HEK293 (cell line): ENCODE measurements at regions of chr14 and their contacts with region 1.

Region 1: GRCh38 chr14:34322940-34323418 is 139.1 kb downstream of the SPTSSA start:
- H3K4me3 ChIP-seq: no peak overlapping the region
- H3K27ac ChIP-seq: no peak overlapping the region
- H3K4me1 ChIP-seq: no peaks in the 10 kb centered on the region
- CTCF ChIP-seq: 0 out of 2 replicates have a peak, but pooled peaks have one; percentile 11

Region 2: DNA sequence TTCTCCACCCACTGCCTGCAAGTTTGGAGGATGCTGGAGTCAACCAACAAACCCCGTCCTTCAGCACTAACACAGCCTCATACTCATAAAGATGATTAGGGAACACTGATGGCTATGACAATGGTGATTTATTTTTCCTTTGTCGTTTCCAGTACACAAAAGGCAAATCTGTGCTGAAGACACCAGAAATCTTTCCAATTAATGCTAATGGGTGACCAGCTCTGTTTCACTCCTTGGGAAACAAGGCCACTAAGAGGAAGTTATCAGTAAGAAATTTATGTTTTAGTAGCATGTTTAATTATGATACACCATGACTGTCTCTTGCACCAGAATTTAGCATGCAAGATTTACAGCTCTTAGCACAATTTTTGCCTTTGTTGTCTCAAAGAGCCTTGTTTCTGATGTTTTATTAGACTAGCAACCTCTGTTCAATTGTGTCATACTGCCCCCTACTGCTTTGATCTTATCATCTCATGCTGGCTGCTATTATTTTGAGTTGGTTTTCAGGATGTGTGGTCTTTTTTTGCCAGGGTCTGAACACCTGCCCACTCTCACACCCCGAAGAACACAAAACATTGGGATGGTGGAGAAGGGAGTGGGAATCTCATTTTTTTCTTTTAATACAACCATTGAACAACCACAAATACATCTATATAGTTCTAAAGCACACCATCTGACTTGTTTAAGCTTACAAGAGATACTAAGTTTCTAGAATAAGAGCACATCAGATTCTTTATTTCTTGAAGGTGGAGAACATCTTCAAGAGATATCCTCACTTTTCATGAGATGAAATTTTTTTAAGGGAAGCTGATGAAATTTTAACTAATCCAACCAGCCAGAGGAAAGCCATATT is 21.9 kb before region 1 on chr14:
- CTCF ChIA-PET with region 1: interaction called, 41 read pairs
- POLR2A ChIA-PET with region 1: no interaction called
- H3K4me3 ChIP-seq: no peak overlapping the region
- H3K27ac ChIP-seq: no peak overlapping the region
- H3K4me1 ChIP-seq: no peaks in the 10 kb centered on the region
- CTCF ChIP-seq: peak; percentile 46; the same call in 1 of the 2 replicates